ENCODE measurements at regions of chr4 and their contacts with region 1.

Region 1: DNA sequence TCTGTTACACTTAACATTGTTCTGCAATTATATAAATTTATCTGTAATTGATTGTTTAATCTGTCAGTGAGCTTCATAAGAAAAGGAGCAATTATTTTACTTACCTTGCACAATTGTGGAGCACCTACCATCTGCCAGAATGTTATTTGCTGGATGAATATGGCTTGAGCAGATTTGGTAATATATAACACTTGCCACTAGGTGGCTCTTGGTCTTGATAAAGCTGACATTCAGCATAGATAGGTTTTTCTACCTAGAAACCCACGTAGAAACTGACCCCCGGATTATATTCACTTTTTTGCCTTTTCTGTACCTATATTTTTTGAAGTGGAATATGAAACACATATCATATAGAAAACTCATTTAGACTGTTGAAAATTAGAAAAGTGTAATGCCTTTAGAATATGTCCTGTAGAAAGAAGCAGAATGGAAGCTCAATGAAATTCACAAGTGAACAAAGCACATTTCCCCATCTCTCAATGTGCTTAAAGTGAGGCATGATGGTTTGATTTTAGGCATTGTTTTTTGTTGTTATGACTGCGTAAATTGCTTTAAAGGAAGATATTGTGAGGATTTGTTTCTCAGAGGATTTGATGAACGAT is 9.5 kb downstream of the RBPJ start:
- DNase-seq: peak in 1 of 2 experiments; percentile 47
- H3K4me3 ChIP-seq: no peak overlapping the region
- H3K4me3 Mint-ChIP-seq: no peak overlapping the region
- H3K27ac Mint-ChIP-seq: no peak overlapping the region
- H3K4me1 ChIP-seq: no peaks in the 10 kb centered on the region
- H3K4me1 Mint-ChIP-seq: peaks cover 1% of the 10 kb centered on the region
- H3K27me3 ChIP-seq: no peaks in the 10 kb centered on the region
- H3K27me3 Mint-ChIP-seq: no peaks in the 10 kb centered on the region
- CTCF ChIP-seq: peak; percentile 60

Region 2: DNA sequence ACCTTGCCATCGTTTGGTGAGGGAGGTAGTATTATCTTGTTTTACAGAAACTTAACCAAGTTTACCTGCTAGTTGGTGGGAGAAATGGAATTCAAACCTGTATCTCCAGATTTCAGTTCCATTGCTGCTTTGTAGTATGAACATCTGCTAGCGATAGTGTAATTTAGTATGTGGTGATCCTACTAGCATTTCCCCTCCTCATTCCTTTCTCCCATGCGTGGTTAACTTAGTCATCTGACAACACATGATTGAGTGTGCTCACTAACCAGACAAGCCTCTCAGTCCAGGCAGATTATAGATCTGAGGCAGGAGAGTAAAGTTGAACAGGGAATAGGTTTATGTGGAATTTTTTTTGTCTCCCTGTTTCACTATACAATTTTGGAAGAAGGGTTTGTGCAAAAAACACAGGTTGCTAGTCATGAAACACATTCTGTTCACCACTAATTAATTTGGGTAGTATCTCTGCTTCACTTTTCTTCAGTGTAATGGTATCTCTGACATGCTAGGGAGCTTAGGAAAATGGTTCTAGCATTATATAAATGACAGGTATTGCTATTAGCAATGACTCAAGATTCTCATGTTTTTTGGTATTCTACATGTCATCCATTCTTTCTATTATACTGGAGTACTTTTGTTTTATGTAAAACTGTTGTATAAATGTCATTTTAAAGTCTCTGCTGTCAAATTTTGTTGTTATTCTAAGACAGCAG is 12.2 kb after region 1 on chr4:
- CTCF ChIA-PET with region 1: no interaction called
- POLR2A ChIA-PET with region 1: no interaction called
- intact Hi-C with region 1: no loop called
- DNase-seq: peak in 1 of 2 experiments; percentile 3
- H3K4me3 ChIP-seq: no peak overlapping the region
- H3K4me3 Mint-ChIP-seq: no peak overlapping the region
- H3K27ac Mint-ChIP-seq: no peak overlapping the region
- H3K4me1 ChIP-seq: peaks cover 7% of the 10 kb centered on the region; the same call in 1 of the 2 replicates
- H3K4me1 Mint-ChIP-seq: peaks cover 28% of the 10 kb centered on the region
- H3K27me3 ChIP-seq: no peaks in the 10 kb centered on the region
- H3K27me3 Mint-ChIP-seq: no peaks in the 10 kb centered on the region
- CTCF ChIP-seq: no peak

Region 3: DNA sequence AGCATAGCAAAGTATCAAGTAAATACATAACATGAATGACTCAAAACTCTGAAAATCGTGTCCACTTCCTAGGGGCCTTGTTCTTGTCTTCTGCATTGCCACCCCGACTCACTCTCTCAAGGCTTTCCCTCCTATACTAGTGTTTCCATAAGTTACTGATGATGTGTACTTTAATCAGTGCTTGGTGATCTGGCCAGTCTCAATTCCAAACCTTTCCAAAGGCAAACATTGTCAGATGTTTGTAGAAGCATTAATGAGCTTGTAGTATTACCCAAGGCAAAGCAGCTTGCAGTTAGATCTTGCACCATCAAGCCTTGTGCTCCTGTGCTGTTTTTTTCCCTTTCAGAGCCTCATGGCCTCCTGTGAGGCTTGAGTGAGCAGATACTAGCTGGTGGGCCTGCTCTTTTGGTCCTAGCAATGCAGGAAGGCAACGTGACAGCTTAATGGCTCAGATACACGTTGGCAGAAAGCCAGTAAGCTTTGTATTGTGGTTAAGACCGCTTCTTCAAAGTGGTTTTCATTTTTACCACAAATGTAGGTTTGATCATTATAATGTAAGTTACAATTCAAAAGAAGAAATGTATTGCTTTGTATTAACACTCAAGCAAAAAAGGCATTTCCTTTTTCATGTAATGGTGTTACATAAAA is 42.4 kb after region 1 on chr4:
- CTCF ChIA-PET with region 1: interaction called, 4 read pairs
- POLR2A ChIA-PET with region 1: no interaction called
- intact Hi-C with region 1: loop called (anchors 5 kb)
- DNase-seq: peak; percentile 57 to 67
- H3K4me3 ChIP-seq: no peak overlapping the region
- H3K4me3 Mint-ChIP-seq: peak overlapping the region; percentile 23
- H3K27ac Mint-ChIP-seq: peak overlapping the region; percentile 4
- H3K4me1 ChIP-seq: peaks cover 29% of the 10 kb centered on the region
- H3K4me1 Mint-ChIP-seq: peaks cover 26% of the 10 kb centered on the region
- H3K27me3 ChIP-seq: no peaks in the 10 kb centered on the region
- H3K27me3 Mint-ChIP-seq: no peaks in the 10 kb centered on the region
- CTCF ChIP-seq: no peak

Region 4: GRCh38 chr4:26741491-26741871 is 411.2 kb after region 1 on chr4:
- CTCF ChIA-PET with region 1: interaction called, 12 read pairs
- POLR2A ChIA-PET with region 1: no interaction called
- intact Hi-C with region 1: no loop called
- DNase-seq: no peak
- H3K4me3 ChIP-seq: no peak overlapping the region
- H3K4me3 Mint-ChIP-seq: no peak overlapping the region
- H3K27ac Mint-ChIP-seq: no peak overlapping the region
- H3K4me1 ChIP-seq: no peaks in the 10 kb centered on the region
- H3K4me1 Mint-ChIP-seq: no peaks in the 10 kb centered on the region
- H3K27me3 ChIP-seq: no peaks in the 10 kb centered on the region
- H3K27me3 Mint-ChIP-seq: no peaks in the 10 kb centered on the region
- CTCF ChIP-seq: no peak

Measured in Caco-2 (cell line).